ENCODE measurements at regions of chr19 and their contacts with region 1.

Region 1: GRCh38 chr19:5967994-5968430 is 9.9 kb downstream of the RANBP3 start:
- DNase-seq: peak; percentile 77
- CTCF ChIP-seq: peak; percentile 90

Region 2: GRCh38 chr19:5904352-5905113 is 63.5 kb before region 1 on chr19 and contains the start of gene VMAC:
- CTCF ChIA-PET with region 1: interaction called, 11 read pairs
- POLR2A ChIA-PET with region 1: no interaction called
- DNase-seq: peak; percentile 99
- CTCF ChIP-seq: no peak

Region 3: DNA sequence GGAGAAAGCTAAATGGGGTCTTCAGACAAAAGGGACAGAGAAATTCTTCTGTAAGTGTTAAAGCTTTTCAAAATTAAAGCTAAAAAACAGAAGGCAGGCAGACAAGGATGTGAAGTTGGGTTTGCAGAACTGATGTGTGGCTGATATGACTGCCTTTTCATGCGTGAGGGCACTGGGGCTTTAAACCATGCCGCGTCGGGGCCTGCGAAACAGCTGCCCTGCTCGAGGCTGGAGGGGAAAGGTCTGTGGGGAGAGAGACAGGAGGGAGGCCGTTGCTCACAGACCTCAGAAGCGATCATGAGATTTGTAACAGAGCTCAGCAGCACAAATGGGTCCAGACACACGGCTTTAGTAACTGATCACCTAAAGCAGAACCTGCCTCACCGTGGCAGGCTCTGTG is 30.5 kb before region 1 on chr19:
- CTCF ChIA-PET with region 1: interaction called, 10 read pairs
- POLR2A ChIA-PET with region 1: no interaction called
- DNase-seq: no peak
- CTCF ChIP-seq: no peak

Region 4: GRCh38 chr19:5947435-5947834 is 20.6 kb before region 1 on chr19:
- CTCF ChIA-PET with region 1: interaction called, 88 read pairs
- POLR2A ChIA-PET with region 1: no interaction called
- DNase-seq: no peak
- CTCF ChIP-seq: no peak

Region 5: DNA sequence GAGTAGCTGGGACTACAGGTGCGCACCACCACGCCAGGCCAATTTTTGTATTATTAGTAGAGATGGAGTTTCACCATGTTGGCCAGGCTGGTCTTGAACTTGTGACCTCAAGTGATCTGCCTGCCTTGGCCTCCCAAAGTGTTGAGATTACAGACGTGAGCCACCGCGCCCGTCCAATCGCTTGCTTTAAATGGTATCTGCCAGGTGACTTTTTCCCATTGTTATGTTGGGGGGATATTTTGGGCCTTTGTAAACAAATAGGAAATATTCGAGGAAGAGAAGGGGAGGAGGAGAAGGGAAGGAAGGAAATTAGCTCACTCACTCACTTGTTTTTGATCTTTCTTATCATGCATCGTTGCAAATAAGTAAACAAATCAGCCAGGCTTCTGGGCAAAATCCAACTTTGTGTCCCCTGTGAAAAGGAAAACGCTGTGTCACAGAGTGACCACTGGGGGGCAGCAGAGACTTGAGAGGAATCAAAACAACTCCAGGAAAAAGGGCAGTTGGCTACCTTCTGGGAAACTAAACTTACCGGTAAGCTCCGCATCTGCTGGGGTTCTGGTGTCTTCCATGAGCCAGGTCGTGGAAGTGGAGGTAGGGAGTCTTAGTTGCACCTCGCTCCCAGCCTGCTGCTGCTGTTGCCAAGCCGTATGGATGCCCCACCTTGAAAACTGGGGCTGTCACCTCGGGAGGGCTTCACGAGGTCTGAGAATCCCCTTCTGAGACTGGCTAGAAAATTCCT is 19.2 kb after region 1 on chr19:
- CTCF ChIA-PET with region 1: interaction called, 38 read pairs
- POLR2A ChIA-PET with region 1: no interaction called
- DNase-seq: peak; percentile 79
- CTCF ChIP-seq: peak; percentile 94